ENCODE measurements at regions of chr3 and their contacts with region 1.

Region 1: DNA sequence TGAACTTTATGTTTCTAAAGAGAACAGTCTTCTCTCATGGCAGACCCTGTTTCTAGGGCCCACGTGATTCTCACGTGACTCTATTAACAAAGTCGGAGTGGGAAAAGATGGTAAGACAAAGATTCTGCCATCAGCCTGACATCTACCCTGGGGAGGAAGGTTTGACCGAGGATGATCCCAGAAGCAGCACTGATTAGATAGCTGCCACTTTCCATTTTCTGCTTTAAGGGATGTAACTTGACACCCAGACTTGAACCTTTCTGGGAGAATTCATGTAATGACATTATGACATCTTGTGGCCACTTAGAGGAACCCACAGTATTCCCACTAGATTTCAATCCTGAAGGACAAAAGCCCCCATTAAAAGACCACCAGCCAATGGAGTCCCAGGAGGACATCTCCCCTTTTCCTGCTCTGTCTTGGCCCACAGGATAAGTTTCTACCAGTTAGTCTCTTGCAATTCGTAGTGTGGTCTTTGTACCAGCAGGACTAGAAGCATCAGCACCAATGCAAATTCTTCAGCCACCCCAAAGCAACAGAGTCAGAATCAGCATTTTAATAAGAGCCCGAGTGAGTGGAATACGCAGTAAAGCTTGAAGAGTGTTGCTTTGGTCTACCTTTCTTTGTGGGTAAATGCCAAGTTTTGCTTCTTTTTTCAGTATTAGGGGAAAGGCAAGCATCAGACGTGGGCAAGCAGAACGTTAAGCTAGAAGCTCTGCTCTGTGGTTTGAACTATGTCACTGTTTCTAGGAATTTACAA is 480.5 kb upstream of the PROK2 start:
- DNase-seq: peak; percentile 41
- H3K4me3 ChIP-seq: no peak overlapping the region
- H3K27ac ChIP-seq: no peak overlapping the region
- H3K4me1 ChIP-seq: no peaks in the 10 kb centered on the region
- CTCF ChIP-seq: peak; percentile 76

Region 2: GRCh38 chr3:71875461-71875947 is 389.9 kb before region 1 on chr3:
- CTCF ChIA-PET with region 1: interaction called, 3 read pairs
- POLR2A ChIA-PET with region 1: no interaction called
- intact Hi-C with region 1: loop called (anchors 1 kb)
- DNase-seq: peak; percentile 82
- H3K4me3 ChIP-seq: no peak overlapping the region
- H3K27ac ChIP-seq: no peak overlapping the region
- H3K4me1 ChIP-seq: peaks cover 4% of the 10 kb centered on the region
- CTCF ChIP-seq: peak; percentile 93

Region 3: GRCh38 chr3:71955240-71956068 is 310.0 kb before region 1 on chr3:
- CTCF ChIA-PET with region 1: no interaction called
- POLR2A ChIA-PET with region 1: no interaction called
- intact Hi-C with region 1: loop called (anchors 5 kb)
- DNase-seq: peak; percentile 66
- H3K4me3 ChIP-seq: no peak overlapping the region
- H3K27ac ChIP-seq: no peak overlapping the region
- H3K4me1 ChIP-seq: peaks cover 25% of the 10 kb centered on the region
- CTCF ChIP-seq: peak; percentile 91

Region 4: GRCh38 chr3:72163809-72164634 is 101.4 kb before region 1 on chr3:
- CTCF ChIA-PET with region 1: no interaction called
- POLR2A ChIA-PET with region 1: no interaction called
- intact Hi-C with region 1: no loop called
- DNase-seq: peak; percentile 99
- H3K4me3 ChIP-seq: peak overlapping the region; percentile 45
- H3K27ac ChIP-seq: peak overlapping the region; percentile 90
- H3K4me1 ChIP-seq: peaks cover 52% of the 10 kb centered on the region
- CTCF ChIP-seq: no peak

Measured in OCI-LY7 (cell line).